Ovary (tissue), 10 donors: ENCODE measurements at regions of chr6 and their contacts with region 1.

Region 1: GRCh38 chr6:10609995-10610688 is 84.3 kb downstream of the C6orf52 start:
- DNase-seq: no peak
- H3K4me3 ChIP-seq: no peak overlapping the region
- H3K27ac ChIP-seq: no peak overlapping the region
- H3K4me1 ChIP-seq: no peaks in the 10 kb centered on the region
- H3K27me3 ChIP-seq: no peaks in the 10 kb centered on the region
- CTCF ChIP-seq: no peak
- EP300 ChIP-seq: no peak
- POLR2A ChIP-seq: no peak

Region 2: GRCh38 chr6:9205645-9206044 is 1404.5 kb before region 1 on chr6:
- intact Hi-C with region 1: loop called in 1 of 4 experiments (anchors 5 kb)
- DNase-seq: no peak
- H3K4me3 ChIP-seq: no peak overlapping the region
- H3K27ac ChIP-seq: no peak overlapping the region
- H3K4me1 ChIP-seq: no peaks in the 10 kb centered on the region
- H3K27me3 ChIP-seq: no peaks in the 10 kb centered on the region
- CTCF ChIP-seq: no peak
- EP300 ChIP-seq: no peak
- POLR2A ChIP-seq: no peak

Region 3: DNA sequence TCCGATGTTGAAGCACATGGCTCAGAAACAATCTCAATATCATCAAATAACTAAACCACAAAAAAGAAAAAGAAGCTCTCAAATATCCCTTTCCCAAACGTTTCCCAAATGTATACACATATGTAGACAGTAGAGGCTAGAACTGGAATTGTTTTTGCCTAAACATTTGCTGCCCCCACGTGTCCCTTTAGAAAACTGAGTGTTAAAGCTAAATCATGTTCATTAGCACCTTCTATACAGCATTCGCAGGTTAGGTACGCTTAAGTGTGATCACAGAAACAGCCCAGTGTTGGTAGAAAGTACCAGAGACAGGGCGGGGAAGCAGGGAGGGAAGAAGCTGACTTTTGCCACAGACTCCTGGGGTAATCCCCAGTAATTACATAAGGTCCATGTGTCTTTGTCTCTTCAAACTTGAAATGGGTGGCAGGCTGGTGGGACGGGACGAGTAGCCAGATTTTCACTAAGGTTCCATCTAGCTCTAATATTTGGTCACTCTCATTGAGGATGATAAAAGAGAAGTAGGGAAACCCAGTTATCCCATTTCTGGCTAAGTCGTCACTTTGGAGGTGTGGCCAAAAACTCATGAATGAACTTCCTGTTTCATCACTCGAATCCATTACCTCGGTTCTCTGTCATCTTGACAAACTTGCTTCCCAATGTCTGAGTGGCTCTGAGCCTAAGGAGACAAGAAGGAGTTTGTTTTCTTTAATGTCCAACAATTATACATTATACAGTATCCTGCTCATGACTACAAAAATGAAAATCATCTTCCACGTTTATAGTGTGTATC is 180.3 kb before region 1 on chr6:
- intact Hi-C with region 1: no loop called
- DNase-seq: no peak
- H3K4me3 ChIP-seq: no peak overlapping the region
- H3K27ac ChIP-seq: no peak overlapping the region
- H3K4me1 ChIP-seq: peaks cover 3% of the 10 kb centered on the region
- H3K27me3 ChIP-seq: no peaks in the 10 kb centered on the region
- CTCF ChIP-seq: no peak
- EP300 ChIP-seq: no peak
- POLR2A ChIP-seq: no peak